Activated CD8-positive, alpha-beta T cell treated with anti-CD3 and anti-CD28 coated beads, Interleukin-2, amount 10 ng/mL, durations not matched to agents 7 days and 5 days (primary cell): ENCODE measurements at regions of chr9 and their contacts with region 1.

Region 1: GRCh38 chr9:35636135-35636876 is 14.4 kb downstream of the SIT1 start:
- DNase-seq: no peak
- ATAC-seq: no peak
- H3K4me3 Mint-ChIP-seq: no peak overlapping the region
- H3K27ac Mint-ChIP-seq: no peak overlapping the region
- H3K4me1 Mint-ChIP-seq: peaks cover 56% of the 10 kb centered on the region
- H3K27me3 Mint-ChIP-seq: no peaks in the 10 kb centered on the region

Region 2: GRCh38 chr9:35657546-35658136 is 21.3 kb after region 1 on chr9 and contains the start of gene RMRP:
- CTCF ChIA-PET with region 1: interaction called, 22 read pairs
- POLR2A ChIA-PET with region 1: interaction called, 9 read pairs
- DNase-seq: peak; percentile 94
- ATAC-seq: peak; percentile 92
- H3K4me3 Mint-ChIP-seq: peak within 1 kb of the TSS; percentile 92
- H3K27ac Mint-ChIP-seq: peak within 1 kb of the TSS; percentile 97
- H3K4me1 Mint-ChIP-seq: peaks cover 62% of the 10 kb centered on the region
- H3K27me3 Mint-ChIP-seq: peaks cover 3% of the 10 kb centered on the region
- total RNA-seq, gene RMRP: 7,126 to 12,592 TPM

Region 3: DNA sequence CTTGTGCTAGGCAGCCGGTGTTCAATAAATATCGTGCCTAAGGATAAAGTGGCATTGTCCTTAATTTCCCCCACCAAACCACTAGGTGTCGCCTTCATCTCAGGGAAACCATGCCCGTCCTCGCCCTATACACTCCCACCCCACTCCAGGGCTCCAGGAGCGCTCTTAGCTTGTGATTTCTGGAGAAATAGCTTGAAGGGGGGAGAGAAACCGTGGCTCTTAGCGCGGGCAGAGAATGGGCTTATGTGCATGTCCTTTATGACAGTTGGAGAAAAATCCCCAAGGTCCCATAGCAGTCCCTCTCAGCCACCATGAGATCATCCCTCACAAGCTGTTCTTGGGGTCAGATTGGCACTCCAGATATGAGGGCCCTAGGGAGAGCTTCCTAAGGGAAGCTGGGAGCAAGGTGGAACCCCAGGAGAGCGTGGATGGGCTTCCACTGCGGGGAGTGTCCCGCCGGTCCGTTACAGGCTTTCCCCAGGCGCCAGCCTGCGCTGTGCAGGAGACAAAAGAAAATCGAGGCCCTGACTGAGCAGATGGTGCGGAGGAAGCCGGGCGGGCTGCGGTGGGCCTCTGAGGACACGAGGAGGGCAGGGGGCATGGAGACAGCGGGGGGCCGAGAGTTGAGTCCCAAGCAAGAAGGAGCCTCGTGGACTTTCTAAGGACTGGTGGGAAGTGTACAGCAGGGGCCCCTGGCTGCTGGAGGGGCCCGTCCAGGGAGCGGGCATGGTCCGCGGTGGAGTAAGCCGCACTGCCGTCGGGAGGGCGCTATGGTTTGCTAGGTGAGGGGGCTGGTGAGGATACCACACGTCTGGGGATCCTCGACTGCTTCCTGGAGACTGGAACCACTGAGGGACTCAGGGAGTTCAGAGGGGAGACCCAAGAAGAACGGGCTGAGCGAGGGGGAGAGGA is 154.3 kb after region 1 on chr9:
- CTCF ChIA-PET with region 1: no interaction called
- POLR2A ChIA-PET with region 1: no interaction called
- DNase-seq: peak; percentile 73
- ATAC-seq: peak; percentile 90
- H3K4me3 Mint-ChIP-seq: no peak overlapping the region
- H3K27ac Mint-ChIP-seq: no peak overlapping the region
- H3K4me1 Mint-ChIP-seq: peaks cover 17% of the 10 kb centered on the region
- H3K27me3 Mint-ChIP-seq: no peaks in the 10 kb centered on the region